Activated naive CD4-positive, alpha-beta T cell treated with anti-CD3 and anti-CD28 coated beads for 36 hours (primary cell): ENCODE measurements at regions of chr1 and their contacts with region 1.

Region 1: DNA sequence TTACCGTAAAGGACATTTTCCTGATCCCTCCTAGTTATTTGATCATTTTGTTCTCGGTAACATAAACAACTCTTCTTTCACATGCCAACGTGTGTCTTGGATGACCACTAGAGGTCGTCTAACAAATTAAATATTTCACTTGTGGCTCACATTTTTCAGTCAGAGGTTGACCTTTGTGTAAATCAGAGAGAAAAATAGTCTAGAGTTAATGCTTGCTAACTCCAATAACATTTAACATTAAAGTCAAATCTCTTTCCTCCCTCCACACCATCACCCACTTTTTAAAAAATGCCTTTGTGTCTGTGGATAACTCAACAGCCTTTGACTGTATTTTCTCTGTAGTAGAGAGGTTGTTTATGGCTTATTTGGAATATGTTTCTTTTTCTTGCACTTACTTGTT is 220.5 kb upstream of the B3GALT2 start:
- DNase-seq: no peak
- H3K4me3 Mint-ChIP-seq: no peak overlapping the region
- H3K27ac Mint-ChIP-seq: no peak overlapping the region
- H3K4me1 Mint-ChIP-seq: peaks cover 26% of the 10 kb centered on the region
- H3K27me3 Mint-ChIP-seq: no peaks in the 10 kb centered on the region

Region 2: GRCh38 chr1:193094112-193094511 is 312.8 kb before region 1 on chr1:
- CTCF ChIA-PET with region 1: no interaction called
- intact Hi-C with region 1: no loop called
- DNase-seq: no peak
- H3K4me3 Mint-ChIP-seq: no peak overlapping the region
- H3K27ac Mint-ChIP-seq: no peak overlapping the region
- H3K4me1 Mint-ChIP-seq: no peaks in the 10 kb centered on the region
- H3K27me3 Mint-ChIP-seq: no peaks in the 10 kb centered on the region

Region 3: DNA sequence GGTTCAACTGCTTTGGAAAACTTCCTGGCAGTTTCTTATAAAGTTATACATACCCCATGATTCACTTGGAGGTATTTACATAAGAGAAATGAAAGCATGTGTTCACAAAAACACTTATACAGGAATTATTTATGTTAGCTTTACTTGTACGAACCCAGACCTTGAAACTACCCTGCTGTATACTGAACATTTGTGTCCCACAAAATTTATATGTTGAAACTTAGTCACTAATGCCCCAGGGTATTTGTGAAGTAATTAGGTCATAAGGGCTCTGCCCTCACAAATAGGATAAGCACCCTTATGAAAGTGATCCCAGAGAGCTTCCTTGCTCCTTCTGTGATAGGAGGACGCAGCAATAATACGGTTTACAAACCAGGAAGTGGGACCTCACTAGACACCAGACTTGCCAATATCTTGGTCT is 177.8 kb before region 1 on chr1:
- CTCF ChIA-PET with region 1: no interaction called
- intact Hi-C with region 1: no loop called
- DNase-seq: no peak
- H3K4me3 Mint-ChIP-seq: no peak overlapping the region
- H3K27ac Mint-ChIP-seq: no peak overlapping the region
- H3K4me1 Mint-ChIP-seq: peaks cover 4% of the 10 kb centered on the region
- H3K27me3 Mint-ChIP-seq: no peaks in the 10 kb centered on the region

Region 4: GRCh38 chr1:193392686-193393085 is 14.2 kb before region 1 on chr1:
- CTCF ChIA-PET with region 1: no interaction called
- intact Hi-C with region 1: no loop called
- DNase-seq: no peak
- H3K4me3 Mint-ChIP-seq: no peak overlapping the region
- H3K27ac Mint-ChIP-seq: no peak overlapping the region
- H3K4me1 Mint-ChIP-seq: peaks cover 5% of the 10 kb centered on the region
- H3K27me3 Mint-ChIP-seq: no peaks in the 10 kb centered on the region

Region 5: DNA sequence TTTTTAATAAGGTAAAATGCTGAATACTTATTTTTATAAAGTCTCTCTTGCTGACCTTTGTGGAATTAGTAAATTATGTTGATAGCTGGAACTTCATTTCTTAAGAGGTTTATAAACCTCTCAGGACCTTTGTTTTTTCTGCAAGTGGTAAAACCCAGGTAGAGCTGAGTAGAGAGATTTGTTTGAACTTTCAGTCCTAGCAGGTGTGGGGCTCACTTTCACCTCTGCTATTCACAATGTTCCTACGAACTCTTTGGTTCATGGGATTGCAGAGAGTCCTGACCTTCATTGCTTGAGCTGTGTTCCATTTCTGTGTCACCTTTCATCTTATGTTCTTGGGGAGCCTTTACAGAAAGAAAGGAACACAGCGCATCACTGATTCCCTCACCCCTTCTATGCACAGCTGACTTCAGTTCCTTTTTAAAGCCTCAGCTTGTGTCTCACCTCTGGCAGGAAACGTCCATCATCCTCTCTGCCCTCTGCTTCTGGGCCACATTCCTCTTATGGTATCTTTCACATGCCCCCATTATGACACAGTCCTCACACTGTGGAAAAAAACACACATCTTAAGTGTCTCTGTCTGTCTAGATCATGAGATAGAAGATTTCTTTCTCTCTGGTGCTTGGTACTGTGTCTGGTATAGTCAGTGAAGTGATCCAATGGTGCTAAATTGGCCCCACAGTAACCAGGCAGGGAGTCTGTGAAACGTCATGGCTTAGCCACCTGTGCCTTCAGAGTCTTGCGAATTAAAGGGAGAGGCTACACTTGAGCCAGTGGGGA is 42.0 kb after region 1 on chr1:
- CTCF ChIA-PET with region 1: no interaction called
- intact Hi-C with region 1: loop called (anchors 2 kb)
- DNase-seq: peak; percentile 32
- H3K4me3 Mint-ChIP-seq: no peak overlapping the region
- H3K27ac Mint-ChIP-seq: peak overlapping the region; percentile 18
- H3K4me1 Mint-ChIP-seq: peaks cover 14% of the 10 kb centered on the region
- H3K27me3 Mint-ChIP-seq: no peaks in the 10 kb centered on the region

Region 6: GRCh38 chr1:193479187-193479586 is 72.3 kb after region 1 on chr1:
- CTCF ChIA-PET with region 1: no interaction called
- intact Hi-C with region 1: loop called (anchors 2 kb)
- DNase-seq: peak; percentile 83
- H3K4me3 Mint-ChIP-seq: no peak overlapping the region
- H3K27ac Mint-ChIP-seq: peak overlapping the region; percentile 68
- H3K4me1 Mint-ChIP-seq: peaks cover 47% of the 10 kb centered on the region
- H3K27me3 Mint-ChIP-seq: no peaks in the 10 kb centered on the region

Region 7: DNA sequence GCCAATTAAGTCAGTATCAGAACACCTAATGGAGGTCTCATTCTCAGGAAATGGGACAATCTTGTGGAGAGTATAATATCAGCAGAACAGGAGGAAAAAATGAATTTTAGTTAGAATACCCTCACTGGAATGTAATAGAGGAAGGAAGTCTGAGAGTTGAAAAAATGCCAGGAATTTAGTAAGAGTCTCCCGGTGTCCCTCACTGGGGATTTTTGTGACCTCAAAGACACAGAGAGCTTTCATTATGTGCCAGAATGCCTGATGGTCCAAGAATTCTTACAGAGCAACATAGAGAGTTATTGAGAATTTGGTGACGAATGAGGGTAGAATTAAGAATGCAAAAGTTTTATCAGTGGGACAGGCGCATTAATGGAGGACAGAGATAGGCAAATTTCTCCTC is 223.0 kb after region 1 on chr1:
- CTCF ChIA-PET with region 1: no interaction called
- intact Hi-C with region 1: no loop called
- DNase-seq: no peak
- H3K4me3 Mint-ChIP-seq: no peak overlapping the region
- H3K27ac Mint-ChIP-seq: no peak overlapping the region
- H3K4me1 Mint-ChIP-seq: peaks cover 9% of the 10 kb centered on the region
- H3K27me3 Mint-ChIP-seq: no peaks in the 10 kb centered on the region

Region 8: GRCh38 chr1:194043984-194044755 is 637.3 kb after region 1 on chr1:
- CTCF ChIA-PET with region 1: no interaction called
- intact Hi-C with region 1: loop called (anchors 5 kb)
- DNase-seq: no peak
- H3K4me3 Mint-ChIP-seq: no peak overlapping the region
- H3K27ac Mint-ChIP-seq: no peak overlapping the region
- H3K4me1 Mint-ChIP-seq: peaks cover 27% of the 10 kb centered on the region
- H3K27me3 Mint-ChIP-seq: no peaks in the 10 kb centered on the region